Calu3 (cell line): ENCODE measurements at regions of chr14 and their contacts with region 1.

Region 1: DNA sequence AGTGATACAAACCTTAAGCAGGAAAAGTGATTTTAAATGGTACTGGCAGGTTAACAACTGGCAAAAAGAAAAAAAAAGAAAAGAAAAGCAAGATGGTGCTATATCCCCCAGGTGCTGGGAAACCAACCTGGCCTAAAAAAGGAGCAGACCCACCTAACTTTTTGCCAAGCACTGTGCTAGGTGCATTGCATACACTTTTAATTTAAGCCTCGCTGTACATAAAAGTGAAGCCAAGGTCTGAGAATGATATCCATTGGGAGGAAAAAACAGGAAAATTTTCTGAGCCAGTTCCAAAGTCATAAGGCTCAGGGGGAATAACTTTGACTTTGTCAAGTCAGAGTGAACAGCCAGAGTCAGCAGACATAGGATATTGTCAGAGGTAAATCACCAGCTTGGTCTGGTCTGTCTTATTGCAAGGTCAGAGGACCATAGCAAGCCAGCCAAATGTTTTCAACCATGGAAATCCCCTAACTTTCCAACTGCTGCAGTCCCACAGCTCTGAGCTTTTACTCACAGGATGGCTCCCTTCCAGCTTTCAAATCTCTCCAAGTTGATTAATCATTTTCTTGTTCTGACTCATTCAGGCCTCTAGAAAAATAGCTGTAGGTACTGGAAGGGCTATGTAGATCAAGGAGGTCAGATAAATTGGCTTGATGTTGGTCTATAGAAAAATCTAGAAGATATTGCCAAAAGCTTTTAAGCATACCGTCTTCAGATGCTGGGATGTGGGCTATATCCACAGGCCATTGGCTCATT is 412.9 kb downstream of the RAD51B start:
- DNase-seq: peak; percentile 76
- H3K4me3 Mint-ChIP-seq: no peak overlapping the region
- H3K27ac Mint-ChIP-seq: no peak overlapping the region
- H3K4me1 Mint-ChIP-seq: no peaks in the 10 kb centered on the region
- H3K27me3 Mint-ChIP-seq: no peaks in the 10 kb centered on the region
- CTCF ChIP-seq: no peak

Region 2: GRCh38 chr14:67963960-67964744 is 268.3 kb before region 1 on chr14:
- CTCF ChIA-PET with region 1: no interaction called
- intact Hi-C with region 1: loop called (anchors 5 kb)
- DNase-seq: peak; percentile 39
- H3K4me3 Mint-ChIP-seq: peak overlapping the region; percentile 6
- H3K27ac Mint-ChIP-seq: peak overlapping the region; percentile 68
- H3K4me1 Mint-ChIP-seq: peaks cover 56% of the 10 kb centered on the region
- H3K27me3 Mint-ChIP-seq: no peaks in the 10 kb centered on the region
- CTCF ChIP-seq: no peak

Region 3: GRCh38 chr14:68146807-68147206 is 85.7 kb before region 1 on chr14:
- CTCF ChIA-PET with region 1: no interaction called
- intact Hi-C with region 1: loop called (anchors 2 kb)
- DNase-seq: peak; percentile 35
- H3K4me3 Mint-ChIP-seq: no peak overlapping the region
- H3K27ac Mint-ChIP-seq: peak overlapping the region; percentile 93
- H3K4me1 Mint-ChIP-seq: peaks cover 59% of the 10 kb centered on the region
- H3K27me3 Mint-ChIP-seq: no peaks in the 10 kb centered on the region
- CTCF ChIP-seq: no peak

Region 4: GRCh38 chr14:68172627-68173026 is 59.9 kb before region 1 on chr14:
- CTCF ChIA-PET with region 1: no interaction called
- intact Hi-C with region 1: loop called (anchors 1 kb)
- DNase-seq: no peak
- H3K4me3 Mint-ChIP-seq: no peak overlapping the region
- H3K27ac Mint-ChIP-seq: peak overlapping the region; percentile 99
- H3K4me1 Mint-ChIP-seq: peaks cover 65% of the 10 kb centered on the region
- H3K27me3 Mint-ChIP-seq: no peaks in the 10 kb centered on the region
- CTCF ChIP-seq: no peak

Region 5: GRCh38 chr14:68191567-68192321 is 40.7 kb before region 1 on chr14:
- CTCF ChIA-PET with region 1: interaction called, 8 read pairs
- intact Hi-C with region 1: loop called (anchors 2 kb)
- DNase-seq: peak; percentile 55
- H3K4me3 Mint-ChIP-seq: no peak overlapping the region
- H3K27ac Mint-ChIP-seq: peak overlapping the region; percentile 87
- H3K4me1 Mint-ChIP-seq: peaks cover 51% of the 10 kb centered on the region
- H3K27me3 Mint-ChIP-seq: no peaks in the 10 kb centered on the region
- CTCF ChIP-seq: no peak